ENCODE measurements at regions of chr6 and their contacts with region 1.

Region 1: DNA sequence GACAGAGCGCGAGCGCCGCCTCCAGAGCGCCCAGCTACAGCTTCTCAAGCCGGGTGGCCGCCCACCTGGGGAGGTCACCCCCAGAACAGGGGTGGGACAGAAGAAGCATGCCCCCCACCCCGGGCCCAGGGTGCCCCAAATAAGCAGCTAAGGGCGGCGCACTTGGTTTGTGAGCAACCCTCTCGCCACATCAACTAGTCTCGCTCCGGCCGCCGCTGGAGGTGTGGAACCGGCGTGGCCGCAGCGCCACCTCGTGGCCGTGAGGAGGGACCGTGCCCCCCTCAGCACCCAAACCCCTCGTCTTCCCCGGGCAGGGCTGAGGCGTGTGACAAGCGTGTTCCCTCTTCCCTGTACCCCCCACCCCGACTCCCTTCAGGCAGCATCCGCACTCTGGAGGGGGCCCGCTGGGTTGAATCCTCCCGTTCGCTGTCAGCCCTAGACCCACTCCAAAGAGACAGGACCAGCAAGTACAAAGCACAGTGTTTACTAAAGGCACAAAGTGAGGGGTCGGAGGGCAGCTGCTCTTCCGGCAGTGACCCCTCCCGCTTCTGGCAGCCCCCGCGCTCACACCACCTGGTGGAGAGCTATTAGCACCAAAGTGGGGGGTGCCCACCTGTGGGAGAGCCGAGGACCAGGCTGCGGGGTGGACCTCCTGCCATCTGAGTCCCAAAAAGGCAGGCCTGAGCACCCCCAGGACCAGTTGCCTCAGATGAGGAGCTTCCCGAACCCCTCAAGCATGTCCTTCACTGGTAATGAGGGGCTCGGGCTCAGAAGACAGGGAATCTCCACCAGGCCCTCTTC is 45.4 kb downstream of the MDFI start:
- DNase-seq: peak; percentile 92
- ATAC-seq: peak; percentile 86
- H3K4me3 ChIP-seq: peak overlapping the region; percentile 51
- H3K27ac ChIP-seq: peak overlapping the region; percentile 63
- H3K4me1 ChIP-seq: peaks cover 11% of the 10 kb centered on the region
- H3K27me3 ChIP-seq: no peaks in the 10 kb centered on the region
- CTCF ChIP-seq: peak; percentile 92

Region 2: DNA sequence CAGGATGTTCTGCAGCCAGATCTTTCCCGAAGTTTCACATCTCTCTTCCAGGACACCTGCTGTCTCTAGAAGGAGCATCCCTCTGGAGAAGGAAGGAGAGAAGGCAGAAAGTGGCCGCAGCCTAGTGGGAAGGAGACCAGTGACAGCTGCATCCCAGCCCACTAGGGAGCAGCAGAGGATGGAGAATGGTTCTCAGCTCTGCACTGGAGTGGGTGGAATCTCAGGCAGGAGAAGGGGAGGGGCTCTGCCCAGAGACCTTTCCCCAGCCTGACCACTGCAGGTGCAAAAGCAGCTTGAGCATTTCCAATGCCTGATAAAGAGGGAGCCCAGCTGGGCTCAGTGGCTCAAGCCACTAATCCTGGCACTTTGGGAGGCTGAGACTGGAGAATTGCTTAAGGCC is 316.0 kb before region 1 on chr6:
- intact Hi-C with region 1: loop called (anchors 5 kb)
- DNase-seq: no peak
- ATAC-seq: peak; percentile 54
- H3K4me3 ChIP-seq: no peak overlapping the region
- H3K27ac ChIP-seq: no peak overlapping the region
- H3K4me1 ChIP-seq: peaks cover 9% of the 10 kb centered on the region
- H3K27me3 ChIP-seq: peaks cover 52% of the 10 kb centered on the region
- CTCF ChIP-seq: peak; percentile 42

Region 3: GRCh38 chr6:41463062-41463930 is 220.4 kb before region 1 on chr6:
- intact Hi-C with region 1: loop called (anchors 10 kb)
- DNase-seq: peak; percentile 88
- ATAC-seq: peak; percentile 93
- H3K4me3 ChIP-seq: no peak overlapping the region
- H3K27ac ChIP-seq: no peak overlapping the region
- H3K4me1 ChIP-seq: no peaks in the 10 kb centered on the region
- H3K27me3 ChIP-seq: no peaks in the 10 kb centered on the region
- CTCF ChIP-seq: peak; percentile 70

Region 4: DNA sequence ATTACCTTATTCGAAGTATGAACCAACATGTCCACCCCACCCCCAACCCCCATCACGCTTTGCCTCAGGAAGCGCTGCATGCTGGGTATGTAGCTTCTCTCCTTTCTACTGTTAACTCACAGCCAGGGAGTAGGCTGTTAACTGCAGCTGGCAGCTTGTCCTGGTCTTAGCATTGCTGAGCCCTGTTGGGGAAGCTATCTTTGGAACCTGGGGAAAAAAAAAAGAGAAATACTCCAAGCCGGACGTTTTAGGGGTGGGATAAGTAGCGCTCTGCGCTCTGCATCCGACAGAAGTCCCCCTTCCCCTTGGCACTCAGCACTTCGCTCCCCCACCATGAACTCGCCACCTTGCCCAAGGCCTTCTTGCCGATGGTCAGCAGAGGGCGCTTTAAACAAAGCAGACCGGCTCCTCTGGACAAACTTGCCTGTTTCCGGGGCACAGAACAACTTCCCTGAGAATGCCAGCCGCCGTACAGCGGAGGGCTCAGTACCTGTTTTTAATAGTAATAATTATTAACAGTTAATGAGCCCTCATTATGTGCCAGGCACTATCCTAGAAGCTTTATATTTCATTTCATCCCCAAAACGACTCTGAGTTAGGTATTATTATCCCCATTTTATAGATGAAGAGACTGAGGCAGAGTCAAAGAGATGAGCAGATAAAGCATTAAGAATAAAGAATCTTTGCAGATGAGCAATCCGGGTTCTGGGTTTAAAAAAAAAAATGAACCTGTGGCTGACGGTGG is 80.7 kb before region 1 on chr6:
- intact Hi-C with region 1: loop called (anchors 5 kb)
- DNase-seq: peak; percentile 84
- ATAC-seq: peak; percentile 87
- H3K4me3 ChIP-seq: no peak overlapping the region
- H3K27ac ChIP-seq: no peak overlapping the region
- H3K4me1 ChIP-seq: peaks cover 7% of the 10 kb centered on the region
- H3K27me3 ChIP-seq: no peaks in the 10 kb centered on the region
- CTCF ChIP-seq: peak; percentile 85

Region 5: DNA sequence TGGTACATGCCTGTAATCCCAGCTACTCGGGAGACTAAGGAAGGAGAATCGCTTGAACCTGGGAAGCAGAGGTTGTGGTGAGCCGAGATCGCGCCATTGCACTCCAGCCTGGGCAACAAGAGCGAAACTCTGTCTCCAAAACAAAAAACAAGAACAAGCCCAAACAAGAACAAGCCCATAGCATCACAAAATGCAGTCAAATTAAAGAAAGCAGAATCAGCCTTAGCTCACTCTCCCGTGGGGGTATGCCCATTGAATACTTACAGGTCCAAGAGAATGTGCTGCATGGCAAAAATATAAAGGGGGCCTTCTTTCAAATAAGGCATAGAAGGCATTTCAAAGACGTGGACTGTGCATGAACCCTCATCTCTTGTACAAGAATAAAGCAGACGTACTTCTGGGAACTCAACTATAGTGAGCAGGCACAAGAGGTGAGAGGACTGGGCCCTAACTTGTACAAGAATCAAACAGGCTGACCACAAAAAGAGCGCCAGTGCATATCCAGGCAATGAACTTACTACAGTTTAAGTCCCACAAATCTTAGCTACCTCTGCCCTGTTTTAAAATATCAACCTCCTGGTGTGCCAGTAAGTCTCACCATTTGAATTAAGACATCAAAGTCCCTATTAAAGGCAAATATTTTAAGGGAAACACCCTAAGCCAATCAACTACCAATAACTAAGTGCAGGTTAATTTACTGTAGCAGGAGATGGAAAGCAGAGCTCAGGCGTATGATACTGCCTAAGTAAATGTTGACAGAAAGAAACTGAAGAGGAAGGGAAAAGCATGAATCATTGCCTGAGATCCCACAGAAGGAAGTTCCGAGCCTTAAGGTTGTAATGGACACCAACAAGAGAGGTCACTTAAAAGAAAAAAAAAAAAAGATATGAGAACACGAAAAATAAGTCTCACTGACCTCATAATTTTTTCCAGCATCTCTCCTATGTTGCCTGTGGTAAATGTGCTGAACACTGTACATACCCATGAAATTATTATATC is 141.2 kb after region 1 on chr6:
- intact Hi-C with region 1: no loop called
- DNase-seq: no peak
- ATAC-seq: peak; percentile 93
- H3K4me3 ChIP-seq: no peak overlapping the region
- H3K27ac ChIP-seq: no peak overlapping the region
- H3K4me1 ChIP-seq: peaks cover 6% of the 10 kb centered on the region
- H3K27me3 ChIP-seq: no peaks in the 10 kb centered on the region
- CTCF ChIP-seq: no peak

Region 6: DNA sequence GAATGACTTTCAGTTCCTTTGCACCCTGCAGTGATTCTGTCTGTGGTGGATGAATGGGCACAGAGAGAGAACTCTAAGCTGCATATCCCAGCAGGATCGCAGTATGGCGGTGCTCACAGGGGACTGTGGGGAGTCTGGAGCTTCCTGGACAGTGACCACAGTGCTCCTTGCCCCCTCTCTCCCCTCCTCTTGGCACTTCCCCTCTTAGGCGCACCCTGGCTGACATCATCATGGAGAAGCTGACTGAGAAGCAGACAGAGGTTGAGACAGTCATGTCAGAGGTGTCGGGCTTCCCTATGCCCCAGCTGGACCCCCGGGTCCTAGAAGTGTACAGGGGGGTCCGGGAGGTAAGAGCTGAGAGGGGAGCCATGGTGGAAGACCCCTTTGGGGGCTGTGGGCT is 246.2 kb after region 1 on chr6:
- intact Hi-C with region 1: no loop called
- DNase-seq: no peak
- ATAC-seq: peak; percentile 55
- H3K4me3 ChIP-seq: no peak overlapping the region
- H3K27ac ChIP-seq: no peak overlapping the region
- H3K4me1 ChIP-seq: peaks cover 4% of the 10 kb centered on the region
- H3K27me3 ChIP-seq: no peaks in the 10 kb centered on the region
- CTCF ChIP-seq: no peak

Measured in upper lobe of right lung (tissue), 1 donor.